Colonic mucosa (tissue), 4 donors: ENCODE measurements at regions of chr1 and their contacts with region 1.

Region 1: GRCh38 chr1:17419626-17420328 is 19.7 kb downstream of the RCC2 start:
- DNase-seq: peak; percentile 72
- H3K4me3 ChIP-seq: no peak overlapping the region
- H3K27ac ChIP-seq: no peak overlapping the region
- H3K4me1 ChIP-seq: no peaks in the 10 kb centered on the region
- H3K27me3 ChIP-seq: no peaks in the 10 kb centered on the region
- CTCF ChIP-seq: peak; percentile 100

Region 2: DNA sequence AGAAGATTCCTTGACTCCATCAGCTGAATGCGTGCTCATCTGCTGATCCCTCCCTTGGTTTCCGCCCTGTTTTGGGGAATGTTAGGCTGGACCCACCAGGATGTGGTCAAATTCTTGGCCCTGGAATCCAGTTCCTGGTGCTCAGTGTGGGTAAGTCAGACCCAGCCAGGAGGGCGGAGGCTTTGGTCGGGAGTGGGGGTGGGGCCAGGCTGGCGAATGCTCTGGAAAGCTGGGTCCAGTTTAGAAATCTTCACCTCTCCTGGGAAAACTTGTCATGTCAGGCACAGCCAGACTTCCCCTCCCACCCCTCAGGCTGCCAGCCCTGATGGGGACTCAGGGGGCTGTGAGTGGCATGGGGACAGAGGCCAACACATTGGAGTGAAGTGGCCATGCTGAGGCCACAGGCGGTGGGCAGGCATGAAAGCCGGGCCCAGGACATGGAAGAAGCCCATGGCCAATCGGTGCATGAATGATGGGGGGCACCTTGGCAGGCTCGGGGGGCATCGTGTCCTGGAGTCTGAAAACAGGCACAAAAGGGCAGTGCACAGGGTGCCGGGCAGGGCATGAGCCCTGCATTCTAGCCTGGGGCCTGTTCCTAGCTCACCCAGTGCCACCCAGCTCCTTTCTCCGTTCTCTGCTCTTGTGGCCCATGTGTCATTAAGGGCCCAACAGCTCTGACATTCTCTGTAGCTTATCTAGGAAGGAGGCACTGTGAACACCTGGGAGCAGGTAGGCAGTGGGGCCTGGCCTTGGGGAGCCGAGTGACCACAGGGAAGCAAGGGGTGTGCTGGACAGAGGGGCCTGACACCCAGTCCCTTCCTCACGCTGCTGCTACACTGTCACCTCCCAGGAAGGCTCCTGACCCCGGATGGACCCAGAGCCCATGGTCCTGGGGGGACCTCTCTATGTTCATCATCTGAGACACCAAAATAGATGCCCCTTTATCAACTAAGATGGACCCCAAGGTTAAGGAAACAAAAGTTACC is 229.5 kb before region 1 on chr1:
- intact Hi-C with region 1: no loop called
- DNase-seq: no peak
- H3K4me3 ChIP-seq: no peak overlapping the region
- H3K27ac ChIP-seq: no peak overlapping the region
- H3K4me1 ChIP-seq: no peaks in the 10 kb centered on the region
- H3K27me3 ChIP-seq: no peaks in the 10 kb centered on the region
- CTCF ChIP-seq: no peak

Region 3: DNA sequence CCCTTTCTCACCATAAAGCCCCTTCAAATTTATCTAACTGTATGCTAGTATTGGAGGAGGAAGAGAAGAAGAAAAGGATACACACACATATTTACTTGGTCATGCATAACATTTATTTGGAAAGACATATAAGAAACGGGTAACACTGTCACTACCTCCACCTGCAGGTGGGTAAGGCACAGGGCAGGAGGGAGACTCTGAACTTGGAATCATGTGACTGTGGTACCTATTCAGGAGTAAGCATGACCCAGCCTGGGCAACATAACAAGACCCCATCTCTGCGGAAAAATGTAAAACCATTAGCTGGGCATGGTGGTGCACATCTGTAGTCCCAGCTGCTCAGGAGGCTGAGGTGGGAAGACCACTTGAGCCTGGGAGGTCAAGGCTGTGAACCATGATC is 49.2 kb before region 1 on chr1:
- intact Hi-C with region 1: no loop called
- DNase-seq: no peak
- H3K4me3 ChIP-seq: no peak overlapping the region
- H3K27ac ChIP-seq: no peak overlapping the region
- H3K4me1 ChIP-seq: no peaks in the 10 kb centered on the region
- H3K27me3 ChIP-seq: no peaks in the 10 kb centered on the region
- CTCF ChIP-seq: no peak

Region 4: DNA sequence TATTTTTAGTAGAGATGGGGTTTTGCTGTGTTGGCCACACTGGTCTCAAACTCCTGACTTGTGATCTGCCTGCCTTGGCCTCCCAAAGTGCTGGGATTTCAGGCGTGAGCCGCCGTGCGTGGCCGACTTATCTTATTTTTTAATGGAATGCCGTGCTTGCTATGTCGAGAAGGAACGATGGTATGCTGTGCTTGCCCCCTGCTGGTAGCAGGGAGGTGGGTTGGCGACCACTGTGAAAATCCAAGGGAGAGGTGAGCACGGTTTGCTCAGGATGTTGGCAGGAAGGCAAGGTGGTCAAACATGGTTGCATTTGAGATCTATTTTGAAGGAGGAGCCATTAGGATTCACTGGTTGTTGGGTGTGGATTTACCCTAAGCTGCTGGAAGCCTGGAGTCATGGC is 65.5 kb after region 1 on chr1:
- intact Hi-C with region 1: loop called (anchors 5 kb)
- DNase-seq: no peak
- H3K4me3 ChIP-seq: no peak overlapping the region
- H3K27ac ChIP-seq: no peak overlapping the region
- H3K4me1 ChIP-seq: no peaks in the 10 kb centered on the region
- H3K27me3 ChIP-seq: no peaks in the 10 kb centered on the region
- CTCF ChIP-seq: no peak

Region 5: DNA sequence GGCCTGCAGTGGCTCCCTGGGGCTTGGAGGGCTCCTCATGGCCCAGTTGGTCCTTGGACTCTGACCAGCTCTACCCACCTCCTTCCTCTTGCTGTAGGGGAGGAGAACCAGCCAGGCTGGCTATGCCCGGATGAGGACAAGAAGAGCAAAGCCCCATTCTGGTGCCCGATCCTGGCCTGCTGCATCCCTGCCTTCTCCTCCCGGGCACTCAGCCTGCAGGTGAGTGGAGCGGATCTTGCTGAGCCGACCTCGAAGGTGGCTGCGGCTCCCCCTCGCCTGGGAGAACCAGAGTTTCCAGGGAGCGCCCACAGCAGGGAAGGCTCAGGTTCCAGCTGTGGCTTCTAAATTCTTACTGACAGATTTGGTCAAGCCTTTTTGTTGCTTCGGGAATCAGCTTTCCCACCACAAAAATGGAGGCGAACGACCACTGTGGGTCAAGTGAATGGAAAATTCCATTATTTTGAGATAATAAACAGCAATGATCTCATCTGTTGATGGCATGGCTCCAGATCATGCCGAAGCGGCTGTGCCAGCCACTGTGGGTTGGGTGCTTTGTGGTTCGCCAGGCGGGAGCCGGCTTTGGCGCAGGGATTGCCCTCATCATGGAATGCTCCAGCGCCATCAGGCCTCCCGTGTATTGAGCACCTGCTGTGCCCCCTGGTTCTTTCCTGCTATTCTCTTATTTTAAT is 228.8 kb after region 1 on chr1:
- intact Hi-C with region 1: loop called (anchors 10 kb)
- DNase-seq: no peak
- H3K4me3 ChIP-seq: no peak overlapping the region
- H3K27ac ChIP-seq: no peak overlapping the region
- H3K4me1 ChIP-seq: no peaks in the 10 kb centered on the region
- H3K27me3 ChIP-seq: no peaks in the 10 kb centered on the region
- CTCF ChIP-seq: no peak